Activated naive CD4-positive, alpha-beta T cell treated with anti-CD3 and anti-CD28 coated beads for 36 hours (primary cell): ENCODE measurements at regions of chr6 and their contacts with region 1.

Region 1: GRCh38 chr6:147506704-147507114 is 1.8 kb upstream of the SAMD5 start:
- DNase-seq: peak; percentile 72
- H3K4me3 Mint-ChIP-seq: no peak overlapping the region
- H3K27ac Mint-ChIP-seq: no peak overlapping the region
- H3K4me1 Mint-ChIP-seq: peaks cover 12% of the 10 kb centered on the region
- H3K27me3 Mint-ChIP-seq: peaks cover 63% of the 10 kb centered on the region

Region 2: DNA sequence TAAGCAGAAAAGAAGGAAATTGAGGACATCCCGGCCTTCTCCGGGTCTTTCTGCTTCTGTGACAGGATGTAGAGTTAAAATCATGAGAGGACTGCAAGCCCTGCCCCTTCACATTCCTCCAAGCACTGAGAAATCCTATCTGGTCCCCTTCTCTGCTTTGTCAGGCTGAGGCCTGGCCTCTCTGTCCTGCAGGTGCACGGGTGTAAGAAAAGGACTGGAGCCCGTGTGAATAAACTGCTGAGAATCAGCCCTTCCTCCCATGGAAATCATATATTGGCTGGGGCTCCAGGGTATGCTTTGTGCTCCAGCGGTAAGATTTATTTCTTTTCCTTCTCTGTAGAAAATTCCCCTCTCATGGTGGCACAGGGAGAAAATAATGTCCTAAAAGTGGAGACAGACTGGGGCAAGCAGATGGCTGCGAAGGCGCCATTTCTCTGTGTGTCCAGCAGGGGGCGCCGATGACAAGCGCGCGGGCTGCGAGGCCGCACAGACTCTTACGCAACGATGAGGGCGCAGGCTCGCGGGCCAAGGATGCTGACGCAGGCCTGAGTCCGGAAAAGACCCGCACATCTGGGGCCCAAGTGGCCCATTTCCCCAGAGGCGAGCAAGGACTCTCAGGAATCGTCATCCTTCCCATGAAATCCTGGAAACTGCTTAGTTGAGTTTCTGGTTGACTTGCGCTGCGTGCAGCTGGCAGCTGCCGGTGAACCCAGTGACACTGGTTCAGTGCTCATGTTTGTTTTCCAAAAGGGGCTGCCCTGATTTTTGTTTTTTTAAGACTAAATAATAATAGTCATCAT is 649.3 kb before region 1 on chr6:
- CTCF ChIA-PET with region 1: no interaction called
- intact Hi-C with region 1: loop called (anchors 2 kb)
- DNase-seq: peak; percentile 84
- H3K4me3 Mint-ChIP-seq: no peak overlapping the region
- H3K27ac Mint-ChIP-seq: no peak overlapping the region
- H3K4me1 Mint-ChIP-seq: peaks cover 21% of the 10 kb centered on the region
- H3K27me3 Mint-ChIP-seq: peaks cover 2% of the 10 kb centered on the region

Region 3: GRCh38 chr6:147970975-147971374 is 464.3 kb after region 1 on chr6:
- CTCF ChIA-PET with region 1: no interaction called
- intact Hi-C with region 1: loop called (anchors 2 kb)
- DNase-seq: no peak
- H3K4me3 Mint-ChIP-seq: no peak overlapping the region
- H3K27ac Mint-ChIP-seq: no peak overlapping the region
- H3K4me1 Mint-ChIP-seq: no peaks in the 10 kb centered on the region
- H3K27me3 Mint-ChIP-seq: no peaks in the 10 kb centered on the region

Region 4: GRCh38 chr6:148177589-148178233 is 671.0 kb after region 1 on chr6:
- CTCF ChIA-PET with region 1: interaction called, 10 read pairs
- intact Hi-C with region 1: loop called (anchors 5 kb)
- DNase-seq: peak; percentile 37
- H3K4me3 Mint-ChIP-seq: no peak overlapping the region
- H3K27ac Mint-ChIP-seq: no peak overlapping the region
- H3K4me1 Mint-ChIP-seq: no peaks in the 10 kb centered on the region
- H3K27me3 Mint-ChIP-seq: peaks cover 15% of the 10 kb centered on the region

Region 5: DNA sequence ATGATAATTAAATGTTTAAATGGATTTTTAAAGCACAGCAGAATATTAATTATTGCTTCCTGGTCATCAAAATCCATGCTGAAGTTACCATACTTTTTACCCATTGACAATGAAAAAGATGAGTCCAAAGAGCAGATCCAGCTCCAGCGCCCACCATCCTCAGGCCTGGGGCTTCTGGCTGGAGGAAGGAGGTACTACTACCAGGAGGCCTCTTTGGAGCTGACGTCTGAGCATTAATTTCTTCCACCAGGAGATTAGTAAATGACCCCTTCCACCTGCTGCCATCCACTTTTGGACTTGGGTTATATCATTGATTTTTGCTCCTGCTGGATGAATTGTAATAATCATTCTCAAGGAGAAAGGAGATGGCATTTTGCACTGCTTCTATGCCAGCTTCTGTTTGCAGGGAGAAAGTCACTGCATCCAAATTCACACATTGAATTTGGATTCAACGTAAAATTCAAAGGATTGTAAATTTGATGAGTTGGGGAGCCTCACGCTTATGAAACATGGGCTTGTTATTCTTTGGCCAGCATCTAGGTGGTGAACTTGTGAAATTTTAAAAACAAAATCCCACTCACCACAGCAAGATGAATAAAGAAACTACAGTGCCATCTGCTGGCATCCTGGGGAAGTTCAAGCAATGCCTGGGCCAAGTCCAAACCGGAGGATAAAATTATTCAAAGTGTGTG is 957.8 kb after region 1 on chr6:
- CTCF ChIA-PET with region 1: no interaction called
- intact Hi-C with region 1: loop called (anchors 1 kb)
- DNase-seq: peak; percentile 72
- H3K4me3 Mint-ChIP-seq: no peak overlapping the region
- H3K27ac Mint-ChIP-seq: no peak overlapping the region
- H3K4me1 Mint-ChIP-seq: no peaks in the 10 kb centered on the region
- H3K27me3 Mint-ChIP-seq: peaks cover 13% of the 10 kb centered on the region